ENCODE measurements at regions of chr1 and their contacts with region 1.

Region 1: GRCh38 chr1:21659099-21659923 is 9.8 kb downstream of the RAP1GAP start:
- DNase-seq: peak; percentile 90

Region 2: GRCh38 chr1:21238141-21238800 is 421.0 kb before region 1 on chr1:
- intact Hi-C with region 1: loop called (anchors 5 kb)
- DNase-seq: no peak

Region 3: GRCh38 chr1:21607549-21608529 is 51.5 kb before region 1 on chr1:
- intact Hi-C with region 1: no loop called
- DNase-seq: peak; percentile 93